CD8-positive, alpha-beta memory T cell (primary cell): ENCODE measurements at regions of chr22 and their contacts with region 1.

Region 1: GRCh38 chr22:40636380-40637182 is at the start of gene MRTFA:
- DNase-seq: peak; percentile 98 to 100 (median 99)
- H3K4me3 ChIP-seq: peak within 1 kb of the TSS; percentile 97
- H3K4me3 Mint-ChIP-seq: peak within 1 kb of the TSS; percentile 91 to 99 (median 95)
- H3K27ac ChIP-seq: peak within 1 kb of the TSS; percentile 96
- H3K27ac Mint-ChIP-seq: peak within 1 kb of the TSS; percentile 87 to 98 (median 98)
- H3K4me1 ChIP-seq: peaks cover 28% of the 10 kb centered on the region
- H3K4me1 Mint-ChIP-seq: peaks cover 37 to 48% (median 48%) of the 10 kb centered on the region in 3 donors
- H3K27me3 ChIP-seq: no peaks in the 10 kb centered on the region
- H3K27me3 Mint-ChIP-seq: no peaks in the 10 kb centered on the region
- total RNA-seq, gene MRTFA: 38.6 to 40.5 TPM

Region 2: GRCh38 chr22:40603088-40603605 is 33.4 kb before region 1 on chr22:
- CTCF ChIA-PET with region 1: no interaction called
- POLR2A ChIA-PET with region 1: no interaction called
- DNase-seq: no peak
- H3K4me3 ChIP-seq: no peak overlapping the region
- H3K4me3 Mint-ChIP-seq: no peak overlapping the region
- H3K27ac ChIP-seq: no peak overlapping the region
- H3K27ac Mint-ChIP-seq: peak overlapping the region in 3 of 8 donors; percentile 1 to 64 (median 53)
- H3K4me1 ChIP-seq: peaks cover 9% of the 10 kb centered on the region
- H3K4me1 Mint-ChIP-seq: peaks cover 46 to 67% (median 65%) of the 10 kb centered on the region in 3 donors
- H3K27me3 ChIP-seq: no peaks in the 10 kb centered on the region
- H3K27me3 Mint-ChIP-seq: no peaks in the 10 kb centered on the region

Region 3: DNA sequence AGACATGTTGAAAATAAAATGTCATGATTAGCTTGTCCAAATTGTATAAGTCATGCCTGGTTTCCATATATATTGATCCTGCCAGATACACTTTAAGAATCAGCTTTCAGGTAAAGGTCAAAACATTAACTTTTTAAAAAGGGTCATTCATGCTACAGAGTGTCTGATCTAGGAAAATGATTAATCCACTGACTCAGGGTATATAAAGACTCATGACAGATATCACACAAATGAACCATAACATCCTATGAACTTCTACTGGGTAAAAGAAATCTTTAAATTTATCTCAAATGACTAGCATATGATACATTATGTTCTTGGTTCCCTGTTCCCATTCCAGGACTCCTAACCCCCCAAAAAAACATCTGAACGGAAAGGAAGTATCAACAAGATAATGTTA is 11.8 kb before region 1 on chr22:
- CTCF ChIA-PET with region 1: no interaction called
- POLR2A ChIA-PET with region 1: interaction called, 12 read pairs
- DNase-seq: no peak
- H3K4me3 ChIP-seq: no peak overlapping the region
- H3K4me3 Mint-ChIP-seq: no peak overlapping the region
- H3K27ac ChIP-seq: no peak overlapping the region
- H3K27ac Mint-ChIP-seq: no peak overlapping the region
- H3K4me1 ChIP-seq: no peaks in the 10 kb centered on the region
- H3K4me1 Mint-ChIP-seq: peaks cover 30 to 59% (median 48%) of the 10 kb centered on the region in 3 donors
- H3K27me3 ChIP-seq: no peaks in the 10 kb centered on the region
- H3K27me3 Mint-ChIP-seq: no peaks in the 10 kb centered on the region